ENCODE measurements at regions of chr16 and their contacts with region 1.

Region 1: DNA sequence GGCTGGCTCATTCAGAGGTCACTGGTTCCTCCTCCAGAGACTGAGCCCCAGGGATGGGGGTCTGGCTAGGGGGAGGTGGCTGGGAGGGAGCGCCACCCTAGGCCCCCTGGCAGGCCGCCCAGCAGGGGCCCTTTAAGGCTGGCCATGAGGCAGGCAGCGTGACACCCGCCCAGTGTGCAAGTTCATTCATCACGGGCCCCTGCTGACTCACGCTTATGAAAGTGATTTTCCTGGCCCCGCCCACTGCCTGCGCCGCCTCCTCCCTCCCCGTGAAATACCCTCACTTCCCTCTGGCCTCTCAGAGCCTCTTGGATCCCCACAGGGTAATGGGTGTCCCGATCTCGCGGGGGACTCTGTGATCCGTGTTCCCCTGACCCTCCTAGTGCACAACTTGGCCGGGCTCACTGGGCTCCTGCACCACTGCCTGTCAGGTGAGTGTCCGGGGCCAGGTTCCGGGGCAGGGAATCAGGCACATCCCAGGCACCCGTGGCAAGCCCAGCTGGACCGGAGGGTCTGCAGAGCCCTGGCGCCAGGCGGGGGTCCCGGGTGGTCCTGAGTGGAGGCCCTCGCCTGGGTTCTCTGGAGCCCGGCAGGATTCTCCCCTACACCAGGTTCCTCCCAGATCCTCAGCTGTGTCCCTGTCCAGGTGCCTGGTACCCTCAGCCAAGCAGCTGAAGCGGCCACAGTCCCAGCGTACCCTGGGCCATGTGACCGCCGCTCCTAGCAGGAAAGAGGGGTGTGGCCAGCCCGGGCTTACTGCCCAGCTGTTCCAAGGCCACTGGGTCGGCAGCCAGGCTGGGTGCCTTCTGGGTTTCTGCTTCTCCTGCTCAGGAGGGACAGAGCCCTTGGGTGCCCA is at the start of gene OSGIN1:
- DNase-seq: peak; percentile 95
- ATAC-seq: peak; percentile 87
- H3K4me3 ChIP-seq: peak within 1 kb of the TSS; percentile 80 to 90 (median 83)
- H3K27ac ChIP-seq: peak within 1 kb of the TSS; percentile 94
- H3K4me1 ChIP-seq: peaks cover 74% of the 10 kb centered on the region
- H3K27me3 ChIP-seq: no peaks in the 10 kb centered on the region; a peak in 1 of 5 replicates
- CTCF ChIP-seq: 0 out of 2 replicates have a peak, but pooled peaks have one; percentile 1
- EP300 ChIP-seq: peak; percentile 81 to 85
- POLR2A ChIP-seq: peak; percentile 95 to 96
- RAD21 ChIP-seq: peak; percentile 62; the same call in 1 of the 2 replicates
- total RNA-seq, gene OSGIN1: 18.1 and 27.1 TPM in 2 replicates

Region 2: DNA sequence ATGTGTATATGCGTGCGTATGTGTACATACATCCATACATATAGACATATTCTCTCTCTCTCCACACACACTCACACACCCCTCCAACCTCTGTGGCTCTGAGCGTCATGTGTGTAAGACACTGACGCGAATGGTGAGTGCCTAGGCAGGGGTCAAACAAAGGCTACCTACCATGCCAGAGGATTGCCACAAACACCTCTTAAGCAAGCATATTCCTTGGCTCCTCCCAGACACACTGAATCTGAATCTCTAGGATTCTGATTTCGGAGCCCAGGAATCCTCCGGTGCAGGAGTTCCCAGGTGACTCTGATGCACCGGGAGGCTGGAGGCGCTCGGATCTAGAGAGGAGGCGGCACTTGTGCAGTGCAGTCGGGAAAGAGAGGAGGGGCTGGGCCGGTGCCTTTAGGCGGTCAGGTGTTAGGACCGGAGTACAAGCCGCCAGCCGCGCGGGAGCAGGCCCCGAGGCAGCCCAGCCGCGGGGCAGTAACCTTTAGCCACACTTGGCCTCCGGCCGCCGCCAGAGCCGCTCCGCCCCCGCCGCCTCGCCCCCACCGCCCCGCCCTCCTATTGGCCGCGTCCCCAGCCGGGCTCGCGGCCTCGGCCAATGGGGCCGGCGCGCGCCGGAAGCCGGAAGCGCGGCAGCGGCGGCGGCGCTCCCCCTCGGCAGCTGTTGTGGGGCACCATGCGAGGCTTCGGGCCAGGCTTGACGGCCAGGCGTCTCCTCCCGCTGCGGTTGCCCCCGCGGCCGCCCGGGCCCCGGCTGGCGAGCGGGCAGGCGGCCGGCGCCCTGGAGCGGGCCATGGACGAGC is 54.5 kb before region 1 on chr16 and contains the start of gene MLYCD:
- CTCF ChIA-PET with region 1: no interaction called
- POLR2A ChIA-PET with region 1: interaction called, 4 read pairs
- in situ Hi-C with region 1: no loop called
- intact Hi-C with region 1: loop called (anchors 2 kb)
- DNase-seq: peak; percentile 76
- ATAC-seq: peak; percentile 93
- H3K4me3 ChIP-seq: peak within 1 kb of the TSS; percentile 68 to 84 (median 74)
- H3K27ac ChIP-seq: peak within 1 kb of the TSS; percentile 83
- H3K4me1 ChIP-seq: peaks cover 39% of the 10 kb centered on the region
- H3K27me3 ChIP-seq: peaks cover 0 to 13% of the 10 kb centered on the region in 2 experiments; a peak in 3 of 5 replicates
- CTCF ChIP-seq: no peak
- EP300 ChIP-seq: peak; percentile 11 to 33; a peak in 2 of 4 replicates
- POLR2A ChIP-seq: peak; percentile 61 to 74
- RAD21 ChIP-seq: no peak
- total RNA-seq, gene MLYCD: 2.8 and 4.0 TPM in 2 replicates

Region 3: DNA sequence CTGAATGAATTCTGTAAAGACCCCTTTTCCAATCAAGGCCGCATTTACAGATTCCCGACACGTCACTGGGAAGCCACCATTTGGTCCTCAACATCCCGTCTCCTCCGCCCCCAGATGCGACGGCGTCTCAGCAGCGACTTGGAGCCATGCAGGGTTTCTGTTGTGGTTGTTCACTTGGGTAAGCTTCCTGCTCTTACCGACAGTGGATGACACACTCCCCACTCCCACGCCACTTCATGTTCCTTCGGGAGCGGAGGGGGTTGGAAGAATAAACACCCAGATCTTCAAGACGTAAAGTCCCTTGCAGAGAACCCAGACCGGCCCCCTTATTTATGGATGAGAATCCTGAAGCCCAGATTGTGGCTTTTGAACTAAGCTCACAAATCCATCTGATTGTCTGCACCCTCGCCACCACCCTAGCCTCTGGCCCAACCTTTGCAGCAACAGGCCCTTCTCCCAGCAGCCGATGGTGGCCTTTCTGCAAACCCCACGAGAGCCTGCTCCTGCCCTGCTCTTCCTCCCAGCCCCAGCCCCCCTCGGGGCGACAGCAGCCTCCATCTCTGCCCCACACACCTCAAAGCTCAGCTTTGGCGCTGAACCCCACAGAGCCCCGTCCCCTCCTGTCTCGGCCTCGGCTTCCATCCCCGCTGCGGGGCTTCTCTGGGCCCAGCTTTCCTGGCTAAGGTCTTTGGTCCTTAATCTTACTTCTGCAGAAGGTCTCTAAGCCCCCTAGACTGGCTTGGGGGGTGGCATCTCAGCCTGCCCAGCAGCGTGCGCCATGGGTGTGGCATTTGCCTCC is 19.1 kb before region 1 on chr16:
- CTCF ChIA-PET with region 1: no interaction called
- POLR2A ChIA-PET with region 1: interaction called, 46 read pairs
- in situ Hi-C with region 1: no loop called
- intact Hi-C with region 1: no loop called
- DNase-seq: no peak
- ATAC-seq: no peak
- H3K4me3 ChIP-seq: no peak overlapping the region
- H3K27ac ChIP-seq: no peak overlapping the region
- H3K4me1 ChIP-seq: peaks cover 40% of the 10 kb centered on the region
- H3K27me3 ChIP-seq: peaks cover 7 to 72% of the 10 kb centered on the region in 2 experiments; a peak in 4 of 5 replicates
- CTCF ChIP-seq: no peak
- EP300 ChIP-seq: no peak
- POLR2A ChIP-seq: no peak
- RAD21 ChIP-seq: no peak

Region 4: GRCh38 chr16:83964684-83965443 is 11.7 kb after region 1 on chr16:
- CTCF ChIA-PET with region 1: no interaction called
- POLR2A ChIA-PET with region 1: interaction called, 12 read pairs
- in situ Hi-C with region 1: no loop called
- intact Hi-C with region 1: no loop called
- DNase-seq: no peak
- ATAC-seq: peak; percentile 1; the same call in 1 of the 3 replicates
- H3K4me3 ChIP-seq: no peak overlapping the region
- H3K27ac ChIP-seq: no peak overlapping the region
- H3K4me1 ChIP-seq: no peaks in the 10 kb centered on the region
- H3K27me3 ChIP-seq: 0 out of 5 replicates have a peak, but pooled peaks cover 0 to 3% of the 10 kb centered on the region in 2 experiments
- CTCF ChIP-seq: no peak
- EP300 ChIP-seq: no peak
- POLR2A ChIP-seq: peak in 1 of 2 experiments; percentile 41; a peak in 1 of 4 replicates
- RAD21 ChIP-seq: no peak

Region 5: GRCh38 chr16:83994087-83994486 is 40.9 kb after region 1 on chr16:
- CTCF ChIA-PET with region 1: no interaction called
- POLR2A ChIA-PET with region 1: no interaction called
- in situ Hi-C with region 1: no loop called
- intact Hi-C with region 1: no loop called
- DNase-seq: peak; percentile 75
- ATAC-seq: peak; percentile 10; the same call in 2 of the 3 replicates
- H3K4me3 ChIP-seq: no peak overlapping the region
- H3K27ac ChIP-seq: no peak overlapping the region
- H3K4me1 ChIP-seq: peaks cover 25% of the 10 kb centered on the region
- H3K27me3 ChIP-seq: peaks cover 2 to 22% of the 10 kb centered on the region in 2 experiments; a peak in 4 of 5 replicates
- CTCF ChIP-seq: no peak
- EP300 ChIP-seq: peak in 1 of 2 experiments; percentile 52; a peak in 2 of 4 replicates
- POLR2A ChIP-seq: no peak
- RAD21 ChIP-seq: no peak

Region 6: GRCh38 chr16:84044118-84044488 is 90.9 kb after region 1 on chr16:
- CTCF ChIA-PET with region 1: interaction called, 25 read pairs
- POLR2A ChIA-PET with region 1: interaction called, 13 read pairs
- in situ Hi-C with region 1: loop called (anchors 5 kb)
- intact Hi-C with region 1: loop called (anchors 1 kb)
- DNase-seq: peak; percentile 73
- ATAC-seq: peak; percentile 72
- H3K4me3 ChIP-seq: no peak overlapping the region
- H3K27ac ChIP-seq: no peak overlapping the region
- H3K4me1 ChIP-seq: peaks cover 37% of the 10 kb centered on the region
- H3K27me3 ChIP-seq: peaks cover 2 to 38% of the 10 kb centered on the region in 2 experiments; a peak in 3 of 5 replicates
- CTCF ChIP-seq: peak; percentile 80
- EP300 ChIP-seq: no peak
- POLR2A ChIP-seq: no peak
- RAD21 ChIP-seq: peak; percentile 61

Region 7: DNA sequence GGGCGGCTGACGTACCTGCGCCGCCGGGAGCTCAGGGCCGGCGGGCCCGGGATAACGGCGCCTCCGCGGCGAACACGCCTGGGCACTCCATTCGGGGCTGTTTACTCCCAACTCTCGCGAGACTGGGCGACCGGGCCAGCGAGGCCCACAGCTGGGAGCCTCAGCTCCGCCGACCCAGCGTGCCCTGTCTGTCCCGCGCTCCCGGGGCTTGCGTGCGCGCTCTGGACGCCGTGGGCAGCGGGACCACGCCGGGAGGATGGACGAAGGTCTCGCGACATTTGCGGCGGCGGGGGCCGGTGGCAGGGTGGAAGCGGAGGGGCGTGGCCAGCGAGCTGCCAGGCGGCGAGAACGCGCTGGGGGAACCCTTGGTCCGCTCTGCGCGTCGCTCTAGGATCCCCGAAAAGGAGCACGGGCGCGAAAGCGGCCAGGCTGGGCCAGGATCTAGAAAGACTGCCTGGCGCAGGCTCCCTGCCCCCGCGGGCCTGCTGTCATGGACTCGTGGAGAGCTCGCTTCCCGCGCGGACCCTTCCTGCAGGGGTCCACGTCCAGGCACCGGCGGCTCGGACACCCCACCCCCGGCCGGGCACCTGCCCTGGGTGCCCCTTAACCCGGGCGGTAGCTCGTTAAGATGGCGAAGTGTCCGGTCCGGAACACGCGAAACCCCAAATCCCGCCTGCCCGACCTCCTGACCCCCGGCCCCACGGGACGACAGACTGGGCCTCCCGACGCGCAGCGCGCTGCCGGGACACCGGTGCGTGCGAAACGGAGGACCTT is 163.7 kb after region 1 on chr16 and contains the start of gene MBTPS1:
- CTCF ChIA-PET with region 1: no interaction called
- POLR2A ChIA-PET with region 1: interaction called, 15 read pairs
- in situ Hi-C with region 1: no loop called
- intact Hi-C with region 1: no loop called
- DNase-seq: peak; percentile 97
- ATAC-seq: peak; percentile 96
- H3K4me3 ChIP-seq: peak within 1 kb of the TSS; percentile 92 to 99 (median 93)
- H3K27ac ChIP-seq: peak within 1 kb of the TSS; percentile 85
- H3K4me1 ChIP-seq: peaks cover 30% of the 10 kb centered on the region
- H3K27me3 ChIP-seq: peaks cover 0 to 3% of the 10 kb centered on the region in 2 experiments; a peak in 1 of 5 replicates
- CTCF ChIP-seq: peak; percentile 32
- EP300 ChIP-seq: no peak; a peak in 1 of 4 replicates
- POLR2A ChIP-seq: peak; percentile 92 to 95
- RAD21 ChIP-seq: peak; percentile 37
- total RNA-seq, gene MBTPS1: 42.0 and 56.7 TPM in 2 replicates

Region 8: GRCh38 chr16:84186685-84187437 is 233.7 kb after region 1 on chr16 and contains the start of gene TAF1C:
- CTCF ChIA-PET with region 1: no interaction called
- POLR2A ChIA-PET with region 1: interaction called, 5 read pairs
- in situ Hi-C with region 1: loop called (anchors 25 kb)
- intact Hi-C with region 1: no loop called
- DNase-seq: peak; percentile 92
- ATAC-seq: peak; percentile 93
- H3K4me3 ChIP-seq: peak within 1 kb of the TSS; percentile 86 to 100 (median 99)
- H3K27ac ChIP-seq: peak within 1 kb of the TSS; percentile 55
- H3K4me1 ChIP-seq: peaks cover 14% of the 10 kb centered on the region
- H3K27me3 ChIP-seq: no peaks in the 10 kb centered on the region
- CTCF ChIP-seq: peak; percentile 99
- EP300 ChIP-seq: 0 out of 4 replicates have a peak, but pooled peaks of 1 of the 2 experiments have one; percentile 24
- POLR2A ChIP-seq: peak; percentile 67 to 89
- RAD21 ChIP-seq: peak; percentile 92
- total RNA-seq, gene TAF1C: 8.3 and 15.6 TPM in 2 replicates

Region 9: DNA sequence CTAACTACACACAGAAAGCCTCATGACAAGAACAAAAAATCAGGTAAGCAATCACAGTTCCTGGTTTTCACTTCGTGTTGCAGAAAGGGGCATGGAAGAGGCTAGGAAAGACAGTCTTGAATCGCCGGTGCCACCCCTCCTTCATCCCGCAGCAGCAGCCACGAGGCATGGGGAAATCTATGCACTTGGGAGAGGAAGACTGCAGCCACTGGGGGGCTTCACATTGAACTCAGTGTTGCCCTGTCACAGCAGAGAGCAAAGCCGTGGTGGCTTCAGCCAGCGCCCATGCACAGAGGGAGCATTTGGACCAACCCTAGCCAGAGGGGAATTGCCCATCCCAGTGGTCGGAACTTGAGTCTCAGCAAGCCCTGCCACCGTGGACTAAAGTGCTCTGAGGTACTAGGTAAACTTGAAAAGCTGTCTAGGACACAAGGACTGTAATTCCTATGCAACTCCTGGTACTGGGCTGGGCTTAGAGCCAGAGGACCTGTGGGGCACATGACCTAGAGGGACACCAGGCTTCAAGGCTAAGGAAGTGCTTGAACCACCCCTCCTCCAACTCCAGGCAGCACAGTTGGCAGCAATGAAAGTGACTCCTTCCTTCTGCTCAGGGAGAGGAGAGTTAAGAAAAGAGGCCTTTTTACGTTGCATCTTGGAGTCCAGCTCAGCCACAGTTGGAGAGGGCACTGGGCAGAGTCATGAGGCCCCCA is 380.0 kb after region 1 on chr16:
- CTCF ChIA-PET with region 1: no interaction called
- POLR2A ChIA-PET with region 1: no interaction called
- in situ Hi-C with region 1: no loop called
- intact Hi-C with region 1: no loop called
- DNase-seq: no peak
- ATAC-seq: peak; percentile 69
- H3K4me3 ChIP-seq: no peak overlapping the region
- H3K27ac ChIP-seq: no peak overlapping the region
- H3K4me1 ChIP-seq: no peaks in the 10 kb centered on the region
- H3K27me3 ChIP-seq: peaks cover 2 to 39% of the 10 kb centered on the region in 2 experiments; a peak in 4 of 5 replicates
- CTCF ChIP-seq: 0 out of 2 replicates have a peak, but pooled peaks have one; percentile 15
- EP300 ChIP-seq: no peak
- POLR2A ChIP-seq: no peak
- RAD21 ChIP-seq: no peak